Aorta (tissue), 5 donors: ENCODE measurements at regions of chr11 and their contacts with region 1.

Region 1: DNA sequence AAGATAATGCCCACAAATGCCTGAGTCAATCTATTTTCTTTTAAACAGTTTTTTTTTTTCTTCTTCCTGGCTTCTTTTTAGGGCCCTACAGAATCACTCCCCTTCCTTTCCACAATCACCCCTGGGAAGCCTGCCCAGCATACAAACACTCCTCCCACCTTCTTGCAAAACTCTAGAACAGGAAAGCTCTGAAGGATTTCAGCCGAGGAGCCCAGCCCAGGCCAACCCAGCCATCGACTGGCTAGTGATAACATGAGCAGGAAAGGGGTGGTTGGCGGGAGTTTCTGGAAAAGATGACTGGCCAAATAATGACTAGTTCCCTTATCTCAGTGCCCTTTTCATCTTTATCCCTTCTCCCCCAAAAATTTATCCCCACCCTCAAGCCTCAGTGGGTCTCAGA is 68.2 kb downstream of the USP35 start:
- DNase-seq: peak; percentile 92 to 93
- ATAC-seq: peak; percentile 93
- H3K4me3 ChIP-seq: no peak overlapping the region
- H3K27ac ChIP-seq: peak overlapping the region; percentile 37 to 64
- H3K4me1 ChIP-seq: peaks cover 2 to 15% of the 10 kb centered on the region in 2 donors
- H3K27me3 ChIP-seq: no peaks in the 10 kb centered on the region

Region 2: GRCh38 chr11:78069465-78069864 is 187.5 kb before region 1 on chr11:
- intact Hi-C with region 1: no loop called
- DNase-seq: no peak
- ATAC-seq: no peak
- H3K4me3 ChIP-seq: no peak overlapping the region
- H3K27ac ChIP-seq: no peak overlapping the region
- H3K4me1 ChIP-seq: no peaks in the 10 kb centered on the region
- H3K27me3 ChIP-seq: no peaks in the 10 kb centered on the region

Region 3: GRCh38 chr11:78202733-78203167 is 54.2 kb before region 1 on chr11:
- intact Hi-C with region 1: no loop called
- DNase-seq: no peak
- ATAC-seq: no peak
- H3K4me3 ChIP-seq: no peak overlapping the region
- H3K27ac ChIP-seq: no peak overlapping the region
- H3K4me1 ChIP-seq: no peaks in the 10 kb centered on the region
- H3K27me3 ChIP-seq: no peaks in the 10 kb centered on the region

Region 4: DNA sequence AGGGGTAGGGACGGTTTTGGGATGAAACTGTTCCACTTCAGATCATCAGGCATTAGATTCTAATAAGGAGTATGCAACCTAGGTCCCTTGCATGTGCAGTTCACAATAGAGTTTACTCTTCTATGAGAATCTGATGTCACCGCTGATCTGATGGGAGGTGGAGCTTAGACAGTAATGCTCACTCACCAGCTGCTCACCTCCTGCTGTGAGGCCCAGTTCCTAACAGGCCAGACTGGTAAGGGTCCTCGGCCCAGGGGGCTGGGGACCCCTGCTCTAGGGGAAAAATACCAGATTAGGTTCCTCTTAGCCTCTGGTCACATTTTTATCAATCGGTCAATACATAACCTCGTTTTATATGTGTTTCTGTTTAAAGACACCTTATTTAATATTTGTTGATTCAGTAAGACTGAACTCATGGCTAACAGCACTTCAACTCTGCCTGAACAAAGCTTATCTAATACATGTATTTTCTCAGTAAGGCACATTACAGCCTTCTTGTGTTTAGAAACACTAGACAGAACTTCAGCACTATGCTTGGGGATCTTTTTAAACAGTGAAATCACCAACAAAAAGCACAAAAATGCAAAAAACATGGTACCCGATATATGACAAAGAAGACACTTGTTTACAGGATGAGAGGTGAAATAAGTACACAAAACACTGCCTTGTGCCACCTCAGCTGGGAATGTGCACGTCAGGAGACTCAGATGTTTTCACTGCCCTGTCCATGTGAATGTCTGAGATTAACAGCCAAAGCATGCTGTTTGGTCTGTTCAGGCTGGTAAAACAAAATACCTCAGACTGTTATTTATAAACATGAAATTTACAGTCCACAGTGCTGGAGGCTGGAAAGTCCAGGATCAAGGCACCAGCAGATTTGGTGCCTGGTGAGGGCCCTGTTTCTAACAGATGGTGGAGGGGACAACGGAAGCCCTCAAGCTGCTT is 39.3 kb after region 1 on chr11:
- intact Hi-C with region 1: no loop called
- DNase-seq: no peak
- ATAC-seq: no peak
- H3K4me3 ChIP-seq: no peak overlapping the region
- H3K27ac ChIP-seq: no peak overlapping the region
- H3K4me1 ChIP-seq: peaks cover 1 to 8% of the 10 kb centered on the region in 2 donors
- H3K27me3 ChIP-seq: no peaks in the 10 kb centered on the region

Region 5: DNA sequence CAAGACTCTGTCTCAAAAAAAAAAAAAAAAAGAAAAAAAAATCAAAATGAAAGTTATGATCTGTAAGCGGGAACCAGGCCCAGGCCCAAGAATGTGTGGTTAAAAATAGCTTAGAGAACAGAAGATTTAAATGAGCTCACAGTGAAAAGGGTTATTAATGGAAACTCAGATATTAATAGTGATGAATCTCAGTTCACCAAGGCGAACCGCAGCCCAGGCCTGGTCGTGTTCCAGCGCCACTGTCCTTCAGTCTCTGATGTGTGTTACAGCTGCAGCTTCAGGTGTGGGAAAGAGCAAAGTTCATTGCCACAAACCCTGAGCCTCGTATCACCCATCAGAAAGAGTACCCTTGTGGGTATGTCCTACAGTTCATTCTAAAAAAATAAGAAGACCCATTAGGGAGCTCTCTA is 53.5 kb after region 1 on chr11:
- intact Hi-C with region 1: loop called (anchors 5 kb)
- DNase-seq: peak; percentile 76 to 86
- ATAC-seq: peak; percentile 81
- H3K4me3 ChIP-seq: no peak overlapping the region
- H3K27ac ChIP-seq: peak overlapping the region in 1 of 2 donors; percentile 67
- H3K4me1 ChIP-seq: peaks cover 8 to 17% of the 10 kb centered on the region in 2 donors
- H3K27me3 ChIP-seq: no peaks in the 10 kb centered on the region